ENCODE measurements at regions of chr16 and their contacts with region 1.

Region 1: GRCh38 chr16:4538350-4539235 is at the start of gene CDIP1:
- DNase-seq: peak; percentile 96 to 98 (median 98)
- ATAC-seq: peak; percentile 92 to 97 (median 96)
- H3K4me3 ChIP-seq: peak within 1 kb of the TSS; percentile 69 to 97 (median 86)
- H3K27ac ChIP-seq: peak within 1 kb of the TSS; percentile 70 to 99 (median 92)
- H3K4me1 ChIP-seq: peaks cover 0 to 40% (median 17%) of the 10 kb centered on the region in 12 donors
- H3K27me3 ChIP-seq: no peaks in the 10 kb centered on the region
- CTCF ChIP-seq: peak in 4 of 12 donors; percentile 8 to 28 (median 13)
- POLR2A ChIP-seq: peak; percentile 61 to 92
- total RNA-seq, gene CDIP1: 44.6 to 51.1 (median 46.4) TPM

Region 2: GRCh38 chr16:4425378-4426020 is 113.1 kb before region 1 on chr16 and contains the start of gene DNAJA3:
- intact Hi-C with region 1: loop called in 1 of 10 experiments (anchors 5 kb)
- DNase-seq: peak; percentile 90 to 96 (median 92)
- ATAC-seq: peak; percentile 95 to 99 (median 98)
- H3K4me3 ChIP-seq: peak within 1 kb of the TSS; percentile 64 to 99 (median 82)
- H3K27ac ChIP-seq: peak within 1 kb of the TSS; percentile 90 to 99 (median 96)
- H3K4me1 ChIP-seq: peaks cover 0 to 42% (median 16%) of the 10 kb centered on the region in 12 donors
- H3K27me3 ChIP-seq: no peaks in the 10 kb centered on the region
- CTCF ChIP-seq: peak in 2 of 12 donors; percentile 7 to 13
- POLR2A ChIP-seq: peak; percentile 24 to 85
- total RNA-seq, gene DNAJA3: 47.5 to 88.4 (median 59.7) TPM

Region 3: GRCh38 chr16:4475880-4476788 is 62.5 kb before region 1 on chr16 and contains the start of gene HMOX2:
- intact Hi-C with region 1: loop called in 1 of 10 experiments (anchors 5 kb)
- DNase-seq: peak; percentile 91 to 96 (median 94)
- ATAC-seq: peak; percentile 92 to 97 (median 96)
- H3K4me3 ChIP-seq: peak within 1 kb of the TSS; percentile 65 to 99 (median 91)
- H3K27ac ChIP-seq: peak within 1 kb of the TSS; percentile 67 to 97 (median 92)
- H3K4me1 ChIP-seq: peaks cover 0 to 48% (median 26%) of the 10 kb centered on the region in 12 donors
- H3K27me3 ChIP-seq: no peaks in the 10 kb centered on the region
- CTCF ChIP-seq: peak; percentile 9 to 76 (median 30)
- POLR2A ChIP-seq: peak; percentile 93 to 98
- total RNA-seq, gene HMOX2: 60.6 to 250 (median 117) TPM

Region 4: DNA sequence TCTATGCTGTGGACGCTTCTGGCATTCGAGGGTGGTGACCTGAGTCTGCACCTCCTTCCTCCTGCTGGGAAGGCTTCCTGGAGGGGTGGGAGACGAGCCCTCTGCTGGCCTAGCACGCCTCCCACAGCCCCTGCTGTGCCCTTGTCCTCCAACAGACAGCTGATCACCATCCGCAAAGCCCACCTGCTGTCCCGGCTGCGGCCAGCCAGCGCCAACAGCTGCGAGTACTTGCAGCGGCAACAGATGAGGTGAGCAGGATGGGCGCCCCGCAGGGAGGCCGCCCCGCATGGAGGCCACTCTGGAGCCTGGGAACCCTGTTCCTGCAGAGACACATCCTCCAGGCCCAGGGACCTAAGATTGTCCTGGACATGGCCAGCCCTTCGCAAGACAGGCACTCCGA is 54.5 kb after region 1 on chr16:
- intact Hi-C with region 1: no loop called
- DNase-seq: no peak
- ATAC-seq: no peak
- H3K4me3 ChIP-seq: no peak overlapping the region
- H3K27ac ChIP-seq: no peak overlapping the region
- H3K4me1 ChIP-seq: no peaks in the 10 kb centered on the region
- H3K27me3 ChIP-seq: no peaks in the 10 kb centered on the region
- CTCF ChIP-seq: no peak
- POLR2A ChIP-seq: no peak

Region 5: GRCh38 chr16:4654011-4654963 is 115.7 kb after region 1 on chr16:
- intact Hi-C with region 1: no loop called
- DNase-seq: no peak
- ATAC-seq: no peak
- H3K4me3 ChIP-seq: no peak overlapping the region
- H3K27ac ChIP-seq: no peak overlapping the region
- H3K4me1 ChIP-seq: peaks cover 0 to 5% (median 0%) of the 10 kb centered on the region in 12 donors
- H3K27me3 ChIP-seq: no peaks in the 10 kb centered on the region
- CTCF ChIP-seq: no peak
- POLR2A ChIP-seq: no peak